Calu3 (cell line): ENCODE measurements at regions of chr6 and their contacts with region 1.

Region 1: DNA sequence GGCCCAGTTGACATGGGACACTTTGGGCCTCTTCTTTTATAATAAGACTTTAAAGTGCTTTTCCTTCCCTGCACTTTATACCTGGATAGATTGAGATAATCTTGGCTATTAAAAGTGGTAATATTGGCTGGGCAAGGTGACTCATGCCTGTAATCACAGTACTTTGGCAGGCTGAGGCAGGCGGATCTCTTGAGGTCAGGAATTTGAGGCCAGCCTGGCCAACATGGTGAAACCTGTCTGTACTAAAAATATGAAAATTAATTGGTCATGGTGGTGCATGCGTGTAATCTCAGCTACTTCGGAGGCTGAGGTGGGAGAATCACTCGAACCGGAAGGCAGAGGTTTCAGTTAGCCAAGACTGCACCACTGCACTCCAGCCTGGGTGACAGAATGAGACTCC is 197.1 kb upstream of the RGS17 start:
- DNase-seq: peak; percentile 32
- H3K4me3 Mint-ChIP-seq: no peak overlapping the region
- H3K27ac Mint-ChIP-seq: no peak overlapping the region
- H3K4me1 Mint-ChIP-seq: no peaks in the 10 kb centered on the region
- H3K27me3 Mint-ChIP-seq: no peaks in the 10 kb centered on the region
- CTCF ChIP-seq: no peak

Region 2: GRCh38 chr6:153947808-153948447 is 619.8 kb after region 1 on chr6:
- CTCF ChIA-PET with region 1: no interaction called
- intact Hi-C with region 1: loop called (anchors 10 kb)
- DNase-seq: peak; percentile 35
- H3K4me3 Mint-ChIP-seq: no peak overlapping the region
- H3K27ac Mint-ChIP-seq: no peak overlapping the region
- H3K4me1 Mint-ChIP-seq: no peaks in the 10 kb centered on the region
- H3K27me3 Mint-ChIP-seq: no peaks in the 10 kb centered on the region
- CTCF ChIP-seq: peak; percentile 79